Motor neuron (in vitro differentiated cells): ENCODE measurements at regions of chr22 and their contacts with region 1.

Region 1: DNA sequence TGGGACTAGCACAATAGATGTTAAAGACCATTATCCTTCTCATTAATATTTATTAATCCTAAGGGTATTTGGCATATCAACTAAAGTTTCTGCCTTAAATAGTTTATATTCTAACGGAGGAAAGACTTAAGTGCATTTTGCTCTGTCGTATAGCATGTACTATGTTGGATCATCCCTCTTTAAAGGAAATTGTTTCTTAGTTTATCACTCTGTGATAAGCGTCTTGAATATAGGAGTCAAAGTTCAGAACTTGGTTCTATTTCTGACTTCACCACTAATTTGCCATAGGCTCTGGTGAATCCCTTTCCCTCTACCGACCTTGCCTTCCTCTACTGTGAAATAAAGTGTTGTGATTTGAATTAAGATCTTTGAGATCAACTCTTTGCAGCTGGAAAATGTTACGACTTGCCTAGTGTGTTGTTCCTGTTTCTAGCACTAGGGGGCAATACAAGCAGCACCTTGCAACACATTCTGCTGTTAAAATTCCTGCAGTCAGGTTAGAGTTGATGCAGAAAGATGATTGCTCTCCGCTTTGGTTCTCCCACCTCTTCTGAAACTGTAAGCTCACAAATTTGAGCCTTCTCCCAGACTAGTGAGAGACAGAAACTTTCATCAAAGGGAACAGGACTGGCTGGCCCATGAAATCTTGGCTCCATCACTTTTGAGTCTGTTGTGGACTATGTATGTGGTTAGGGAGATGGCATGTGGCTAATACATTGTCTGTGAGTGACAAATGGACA is 27.8 kb upstream of the ZNRF3 start:
- ATAC-seq: peak; percentile 34 to 68 (median 51)
- H3K4me3 ChIP-seq: no peak overlapping the region
- H3K27ac ChIP-seq: no peak overlapping the region
- H3K4me1 ChIP-seq: no peaks in the 10 kb centered on the region

Region 2: DNA sequence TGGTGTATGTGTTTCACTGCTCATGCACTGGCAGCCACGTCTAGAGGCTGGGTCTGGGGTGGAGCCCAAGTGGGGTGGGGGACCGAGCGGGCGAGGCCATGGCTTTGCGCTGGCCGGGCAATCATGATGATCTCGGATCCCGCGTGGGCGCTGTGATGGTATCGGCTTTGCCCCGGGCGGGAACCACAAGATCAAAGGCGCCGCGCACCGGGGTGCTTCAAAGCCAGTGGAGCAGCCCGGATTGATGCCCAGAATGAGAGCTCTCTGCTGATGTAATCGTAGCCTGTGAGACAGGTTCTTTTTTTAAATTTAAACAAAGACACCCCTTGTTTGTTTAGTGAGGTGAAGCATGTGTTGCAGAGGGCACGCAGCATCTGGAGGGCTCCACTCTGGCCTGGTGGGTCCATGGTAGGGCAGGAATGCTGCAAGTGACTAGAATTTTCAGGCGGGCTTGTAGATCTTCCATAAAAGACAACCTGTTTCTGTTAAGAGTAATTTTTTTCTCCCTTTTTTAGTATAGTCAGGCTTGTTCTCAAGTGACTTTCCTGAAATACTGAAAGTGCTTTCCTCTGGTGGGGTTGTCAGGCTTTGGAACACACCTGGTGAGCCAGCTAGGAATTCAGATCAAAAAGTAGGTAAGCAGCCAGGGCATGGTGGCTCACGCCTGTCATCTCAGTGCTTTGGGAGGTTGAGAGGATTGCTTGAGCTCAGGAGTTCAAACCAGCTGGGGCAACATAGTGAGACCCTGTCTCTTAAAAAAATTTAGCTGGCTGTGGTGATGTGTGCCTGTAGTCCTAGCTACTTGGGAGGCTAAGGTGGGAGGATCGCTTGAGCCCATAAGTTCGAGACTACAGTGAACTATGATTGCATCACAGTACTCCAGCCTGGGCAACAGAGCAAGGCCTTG is 68.6 kb after region 1 on chr22:
- in situ Hi-C with region 1: loop called in 1 of 9 experiments (anchors 10 kb)
- ATAC-seq: peak in 5 of 8 experiments; percentile 80 to 93 (median 88)
- H3K4me3 ChIP-seq: peak overlapping the region in 2 of 5 donors; percentile 6 to 15
- H3K27ac ChIP-seq: no peak overlapping the region
- H3K4me1 ChIP-seq: peaks cover 6 to 7% of the 10 kb centered on the region in 2 donors

Region 3: GRCh38 chr22:29040385-29041275 is 185.1 kb after region 1 on chr22:
- in situ Hi-C with region 1: loop called (anchors 10 to 25 kb)
- ATAC-seq: peak; percentile 79 to 92 (median 86)
- H3K4me3 ChIP-seq: no peak overlapping the region
- H3K27ac ChIP-seq: no peak overlapping the region
- H3K4me1 ChIP-seq: peaks cover 0 to 10% of the 10 kb centered on the region in 2 donors

Region 4: DNA sequence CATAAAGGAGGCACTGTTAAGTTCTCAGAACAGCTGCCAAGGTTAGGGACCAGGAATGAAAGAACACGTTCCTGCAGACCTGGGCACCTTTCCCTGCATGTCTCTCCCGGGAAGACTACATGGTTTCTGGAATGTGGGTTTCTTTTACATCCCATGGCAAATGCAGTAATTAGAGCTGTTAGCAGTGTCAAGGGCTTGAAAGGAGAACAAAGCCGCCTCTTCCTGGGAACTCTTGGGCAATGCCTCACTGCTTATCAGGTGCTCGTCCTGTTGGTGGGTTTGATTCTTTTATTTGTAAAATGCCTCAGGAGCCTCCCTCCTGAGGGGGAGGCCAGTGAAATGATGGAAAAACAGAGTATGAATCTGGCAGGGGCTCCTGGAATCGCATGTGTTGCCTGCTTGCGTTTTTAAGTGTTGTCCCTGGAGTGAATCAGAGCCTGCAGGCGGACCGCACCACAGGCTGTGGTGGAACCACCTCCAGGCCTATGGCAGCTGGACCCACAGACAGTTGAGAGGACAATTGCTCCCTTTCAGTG is 206.8 kb after region 1 on chr22:
- in situ Hi-C with region 1: no loop called
- ATAC-seq: peak in 2 of 8 experiments; percentile 22 to 44
- H3K4me3 ChIP-seq: no peak overlapping the region
- H3K27ac ChIP-seq: no peak overlapping the region
- H3K4me1 ChIP-seq: no peaks in the 10 kb centered on the region

Region 5: DNA sequence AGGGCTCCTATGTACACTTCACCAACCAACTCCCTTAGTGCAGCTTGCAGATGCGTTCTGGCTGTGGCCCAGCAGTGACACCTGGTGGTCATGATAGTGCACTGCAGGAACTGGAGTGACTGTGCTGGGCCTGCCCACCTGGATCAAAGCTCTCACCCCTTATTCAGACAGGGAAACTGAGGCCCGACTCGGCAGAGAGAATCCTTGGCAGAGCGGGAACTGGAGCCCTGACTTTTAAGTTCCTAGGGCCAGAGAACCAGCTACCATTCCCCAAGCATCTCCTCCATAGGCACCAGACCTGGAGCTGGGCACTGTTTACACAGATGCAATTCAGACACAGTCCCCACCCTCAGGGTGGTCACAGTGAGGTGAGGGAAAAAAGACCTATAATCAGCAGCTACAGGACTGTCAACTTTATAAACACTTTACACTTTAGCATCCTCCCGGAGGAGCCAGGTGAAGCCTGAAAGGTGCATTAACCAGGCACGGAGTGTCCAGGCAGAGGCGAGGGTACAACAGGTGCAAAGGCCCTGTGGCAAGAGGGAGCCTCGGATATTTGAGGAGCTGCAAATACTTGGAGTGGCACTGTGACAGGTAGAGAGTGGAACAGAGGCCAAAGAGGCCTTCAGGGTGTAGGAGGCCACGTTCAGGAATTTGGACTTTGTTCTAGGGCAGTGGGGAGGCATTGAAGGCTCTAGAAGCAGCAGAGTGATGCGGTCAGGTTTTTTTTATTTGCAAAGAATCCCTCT is 390.3 kb after region 1 on chr22:
- in situ Hi-C with region 1: loop called in 2 of 9 experiments (anchors 10 to 25 kb)
- ATAC-seq: peak; percentile 86 to 99 (median 90)
- H3K4me3 ChIP-seq: no peak overlapping the region
- H3K27ac ChIP-seq: no peak overlapping the region
- H3K4me1 ChIP-seq: no peaks in the 10 kb centered on the region